Sigmoid colon (tissue), 7 donors: ENCODE measurements at regions of chr4 and their contacts with region 1.

Region 1: DNA sequence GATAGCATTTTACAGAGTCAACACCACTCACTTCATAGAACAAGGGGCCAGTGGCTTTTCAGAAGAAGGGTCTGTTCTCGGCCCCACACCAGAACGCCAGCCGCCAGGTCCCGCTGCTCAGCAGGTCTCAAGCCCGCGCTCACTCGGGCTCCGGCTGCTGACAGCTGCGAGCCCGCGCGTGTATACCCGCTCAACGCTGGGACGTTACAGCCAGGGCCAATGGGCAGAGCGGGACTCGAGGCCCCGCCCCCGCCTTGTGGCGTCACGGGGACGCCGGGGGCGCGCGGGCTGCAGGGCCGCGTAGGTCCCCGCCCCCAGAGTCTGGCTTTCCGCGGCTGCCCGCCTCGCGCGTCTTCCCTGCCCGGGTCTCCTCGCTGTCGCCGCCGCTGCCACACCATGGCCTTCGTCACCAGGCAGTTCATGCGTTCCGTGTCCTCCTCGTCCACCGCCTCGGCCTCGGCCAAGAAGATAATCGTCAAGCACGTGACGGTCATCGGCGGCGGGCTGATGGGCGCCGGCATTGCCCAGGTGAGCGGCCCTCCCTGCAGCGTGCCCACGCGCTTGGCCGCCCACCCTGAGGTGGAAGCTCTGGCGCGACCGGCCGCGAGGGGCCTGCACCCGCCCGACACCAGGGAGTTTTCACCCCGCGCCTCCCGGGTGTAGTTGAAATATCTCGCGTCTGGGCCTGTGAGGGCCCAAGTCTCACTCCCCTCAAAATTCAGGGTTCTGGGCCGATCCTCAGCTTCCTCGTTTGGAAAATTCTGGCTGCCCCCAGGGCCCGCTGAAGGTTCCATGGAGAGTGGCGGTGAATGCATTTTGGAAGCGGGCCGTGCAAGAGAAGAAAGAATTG is at the start of gene HADH:
- DNase-seq: peak; percentile 97
- H3K4me3 ChIP-seq: peak within 1 kb of the TSS; percentile 63 to 92 (median 86)
- H3K27ac ChIP-seq: peak within 1 kb of the TSS; percentile 82 to 96 (median 93)
- H3K4me1 ChIP-seq: peaks cover 0 to 63% (median 57%) of the 10 kb centered on the region in 4 donors
- H3K27me3 ChIP-seq: no peaks in the 10 kb centered on the region
- CTCF ChIP-seq: no peak
- EP300 ChIP-seq: peak in 1 of 4 donors; percentile 26
- POLR2A ChIP-seq: peak; percentile 85 to 91
- total RNA-seq, gene HADH: 46.6 to 119 (median 65.0) TPM

Region 2: DNA sequence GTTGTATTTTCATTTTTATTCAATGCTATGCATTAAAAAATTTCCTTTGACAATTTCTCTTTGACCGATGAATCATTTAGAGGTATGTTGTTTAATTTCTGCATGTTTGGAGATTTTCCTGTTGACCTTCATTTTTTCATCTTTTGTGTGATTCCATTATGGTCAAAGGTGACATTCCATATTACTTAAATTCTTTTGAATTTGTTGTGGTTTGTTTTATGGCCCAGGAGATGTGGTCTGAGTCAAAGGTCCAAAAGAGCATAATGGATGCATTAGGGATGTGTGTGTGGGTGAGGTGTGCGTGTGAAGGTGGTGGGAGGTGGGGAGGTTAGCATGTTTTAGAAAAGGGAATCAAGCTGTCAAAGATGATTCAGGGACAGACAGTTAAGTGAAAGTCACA is 1545.2 kb before region 1 on chr4:
- intact Hi-C with region 1: no loop called
- DNase-seq: no peak
- H3K4me3 ChIP-seq: no peak overlapping the region
- H3K27ac ChIP-seq: no peak overlapping the region
- H3K4me1 ChIP-seq: no peaks in the 10 kb centered on the region
- H3K27me3 ChIP-seq: no peaks in the 10 kb centered on the region
- CTCF ChIP-seq: no peak
- EP300 ChIP-seq: no peak
- POLR2A ChIP-seq: no peak

Region 3: GRCh38 chr4:107824353-107825071 is 165.2 kb before region 1 on chr4 and contains the start of gene SGMS2:
- intact Hi-C with region 1: loop called (anchors 2 kb)
- DNase-seq: peak; percentile 95
- H3K4me3 ChIP-seq: peak within 1 kb of the TSS; percentile 80 to 92 (median 89)
- H3K27ac ChIP-seq: peak within 1 kb of the TSS; percentile 93 to 97 (median 96)
- H3K4me1 ChIP-seq: peaks cover 0 to 40% (median 32%) of the 10 kb centered on the region in 4 donors
- H3K27me3 ChIP-seq: no peaks in the 10 kb centered on the region
- CTCF ChIP-seq: no peak
- EP300 ChIP-seq: peak in 1 of 4 donors; percentile 3
- POLR2A ChIP-seq: peak; percentile 50 to 70
- total RNA-seq, gene SGMS2: 101 to 204 (median 147) TPM

Region 4: GRCh38 chr4:107930821-107931774 is 58.7 kb before region 1 on chr4 and contains the start of gene CYP2U1:
- intact Hi-C with region 1: loop called (anchors 1 kb)
- DNase-seq: peak; percentile 95
- H3K4me3 ChIP-seq: peak within 1 kb of the TSS; percentile 70 to 80 (median 76)
- H3K27ac ChIP-seq: peak within 1 kb of the TSS; percentile 81 to 88 (median 87)
- H3K4me1 ChIP-seq: peaks cover 0 to 31% (median 18%) of the 10 kb centered on the region in 4 donors
- H3K27me3 ChIP-seq: no peaks in the 10 kb centered on the region
- CTCF ChIP-seq: peak in 1 of 4 experiments; percentile 12
- EP300 ChIP-seq: no peak
- POLR2A ChIP-seq: peak; percentile 19 to 41
- total RNA-seq, gene CYP2U1: 11.9 to 16.1 (median 15.2) TPM